HepG2 (cell line): ENCODE measurements at regions of chr1 and their contacts with region 1.

Region 1: DNA sequence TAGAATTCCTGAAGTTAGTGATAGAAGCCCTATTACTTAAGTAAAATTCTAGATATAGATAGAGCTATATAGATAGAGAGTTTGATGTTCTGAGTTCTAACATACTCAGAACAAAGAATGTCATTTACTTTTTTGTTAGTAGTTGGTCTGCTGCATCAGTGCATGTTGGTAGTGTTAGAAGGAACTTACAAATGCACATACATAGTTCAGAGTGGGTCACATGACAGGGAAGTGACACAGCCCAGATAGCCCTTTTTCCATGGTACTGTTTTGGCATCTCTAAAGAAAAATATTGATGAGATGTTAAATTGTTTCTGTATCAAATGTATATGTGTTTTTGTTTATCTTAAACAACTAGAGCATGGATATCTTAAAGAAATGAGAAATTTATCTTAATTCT is 45.7 kb downstream of the DHX9 start:
- DNase-seq: no peak
- ATAC-seq: no peak
- H3K4me3 ChIP-seq: no peak overlapping the region
- H3K27ac ChIP-seq: no peak overlapping the region
- H3K4me1 ChIP-seq: no peaks in the 10 kb centered on the region
- H3K27me3 ChIP-seq: no peaks in the 10 kb centered on the region
- CTCF ChIP-seq: no peak
- EP300 ChIP-seq: no peak
- POLR2A ChIP-seq: no peak
- RAD21 ChIP-seq: no peak

Region 2: DNA sequence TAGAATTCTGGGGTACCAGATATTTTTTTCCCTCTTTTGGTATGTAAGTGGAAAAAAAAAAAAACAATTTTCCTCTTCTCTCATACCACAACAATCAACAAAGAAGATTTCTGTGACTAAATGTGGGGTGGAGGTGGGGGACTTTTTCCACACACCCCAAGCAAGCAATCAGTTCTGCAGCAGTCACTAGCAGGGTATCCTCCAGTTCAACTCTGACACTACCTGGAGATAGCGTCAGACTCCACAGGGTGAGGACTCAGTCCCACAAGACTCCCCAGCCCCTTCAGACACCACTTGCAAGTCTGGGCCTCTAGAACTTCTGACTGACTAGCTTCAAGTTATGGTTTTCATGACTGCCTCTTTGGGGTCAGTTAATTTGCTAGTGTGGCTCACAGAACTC is 39.5 kb before region 1 on chr1:
- CTCF ChIA-PET with region 1: no interaction called
- POLR2A ChIA-PET with region 1: no interaction called
- in situ Hi-C with region 1: loop called (anchors 5 kb)
- intact Hi-C with region 1: no loop called
- DNase-seq: no peak
- ATAC-seq: no peak
- H3K4me3 ChIP-seq: no peak overlapping the region
- H3K27ac ChIP-seq: no peak overlapping the region
- H3K4me1 ChIP-seq: peaks cover 30% of the 10 kb centered on the region
- H3K27me3 ChIP-seq: no peaks in the 10 kb centered on the region
- CTCF ChIP-seq: no peak
- EP300 ChIP-seq: no peak
- POLR2A ChIP-seq: no peak
- RAD21 ChIP-seq: no peak